ENCODE measurements at regions of chr9 and their contacts with region 1.

Region 1: GRCh38 chr9:87336914-87337333 is 160.7 kb upstream of the DAPK1 start:
- DNase-seq: no peak
- ATAC-seq: peak in 3 of 4 donors; percentile 57 to 79 (median 68)
- H3K4me3 ChIP-seq: peak overlapping the region; percentile 17
- H3K27ac ChIP-seq: no peak overlapping the region
- H3K4me1 ChIP-seq: peaks cover 10% of the 10 kb centered on the region
- H3K27me3 ChIP-seq: peaks cover 0 to 14% (median 0%) of the 10 kb centered on the region in 3 donors
- CTCF ChIP-seq: peak; percentile 69

Region 2: DNA sequence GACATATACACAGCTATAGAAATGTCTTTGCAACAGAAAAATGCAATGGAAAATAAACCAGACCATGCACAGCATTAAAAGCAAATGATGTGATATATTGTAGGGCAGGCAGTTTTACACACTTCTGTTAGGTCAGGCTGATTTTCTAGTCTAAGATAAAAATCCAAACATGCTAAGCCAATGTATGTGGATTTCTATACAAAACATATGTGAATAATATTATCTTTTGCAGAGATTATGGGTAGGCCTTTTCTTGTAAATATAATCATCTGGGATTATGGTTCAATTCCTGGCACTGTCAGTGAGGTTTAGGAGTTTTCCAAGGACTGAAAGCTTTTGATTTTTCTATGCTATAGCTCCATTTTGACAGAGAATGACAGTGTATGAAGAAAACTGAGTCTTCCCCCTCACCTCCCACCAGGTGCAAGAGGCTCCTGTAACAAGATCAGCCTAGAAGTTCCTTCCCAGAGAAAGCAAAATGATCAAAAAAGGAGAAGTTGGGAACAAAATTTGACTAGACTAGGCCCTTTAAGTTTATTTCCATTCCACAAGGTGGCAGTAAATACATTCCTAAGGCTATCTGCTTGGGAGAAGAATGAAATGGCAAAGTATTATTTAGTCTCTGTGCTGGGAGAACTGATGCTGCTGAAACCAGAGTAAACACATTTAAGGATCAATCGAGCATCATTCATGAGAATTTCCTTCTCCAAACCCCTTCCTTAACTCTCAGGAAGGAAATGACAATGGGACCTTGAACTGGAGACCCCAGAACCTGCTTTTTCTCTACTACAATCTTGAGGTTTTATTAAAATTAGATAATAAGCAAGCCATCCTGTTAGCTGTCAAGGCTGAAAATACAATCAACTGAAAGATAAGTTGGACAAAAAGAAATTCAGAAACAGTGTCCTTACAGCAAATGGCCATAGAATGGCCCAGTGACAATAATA is 849.8 kb before region 1 on chr9:
- intact Hi-C with region 1: loop called in 1 of 2 experiments (anchors 5 kb)
- DNase-seq: no peak
- ATAC-seq: peak in 3 of 4 donors; percentile 40 to 78 (median 51)
- H3K4me3 ChIP-seq: no peak overlapping the region
- H3K27ac ChIP-seq: no peak overlapping the region
- H3K4me1 ChIP-seq: no peaks in the 10 kb centered on the region
- H3K27me3 ChIP-seq: no peaks in the 10 kb centered on the region
- CTCF ChIP-seq: peak; percentile 68

Region 3: DNA sequence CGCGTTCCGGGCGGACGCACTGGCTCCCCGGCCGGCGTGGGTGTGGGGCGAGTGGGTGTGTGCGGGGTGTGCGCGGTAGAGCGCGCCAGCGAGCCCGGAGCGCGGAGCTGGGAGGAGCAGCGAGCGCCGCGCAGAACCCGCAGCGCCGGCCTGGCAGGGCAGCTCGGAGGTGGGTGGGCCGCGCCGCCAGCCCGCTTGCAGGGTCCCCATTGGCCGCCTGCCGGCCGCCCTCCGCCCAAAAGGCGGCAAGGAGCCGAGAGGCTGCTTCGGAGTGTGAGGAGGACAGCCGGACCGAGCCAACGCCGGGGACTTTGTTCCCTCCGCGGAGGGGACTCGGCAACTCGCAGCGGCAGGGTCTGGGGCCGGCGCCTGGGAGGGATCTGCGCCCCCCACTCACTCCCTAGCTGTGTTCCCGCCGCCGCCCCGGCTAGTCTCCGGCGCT is 160.7 kb after region 1 on chr9 and contains the start of gene DAPK1:
- intact Hi-C with region 1: loop called in 1 of 2 experiments (anchors 5 kb)
- DNase-seq: peak; percentile 62 to 80
- ATAC-seq: peak; percentile 73 to 87 (median 80)
- H3K4me3 ChIP-seq: peak within 1 kb of the TSS; percentile 69
- H3K27ac ChIP-seq: no peak within 1 kb of the TSS
- H3K4me1 ChIP-seq: no peaks in the 10 kb centered on the region
- H3K27me3 ChIP-seq: peaks cover 0 to 2% (median 0%) of the 10 kb centered on the region in 3 donors
- CTCF ChIP-seq: no peak
- total RNA-seq, gene DAPK1: 2.2 to 8.4 (median 3.4) TPM